Naive thymus-derived CD4-positive, alpha-beta T cell (primary cell): ENCODE measurements at regions of chr4 and their contacts with region 1.

Region 1: DNA sequence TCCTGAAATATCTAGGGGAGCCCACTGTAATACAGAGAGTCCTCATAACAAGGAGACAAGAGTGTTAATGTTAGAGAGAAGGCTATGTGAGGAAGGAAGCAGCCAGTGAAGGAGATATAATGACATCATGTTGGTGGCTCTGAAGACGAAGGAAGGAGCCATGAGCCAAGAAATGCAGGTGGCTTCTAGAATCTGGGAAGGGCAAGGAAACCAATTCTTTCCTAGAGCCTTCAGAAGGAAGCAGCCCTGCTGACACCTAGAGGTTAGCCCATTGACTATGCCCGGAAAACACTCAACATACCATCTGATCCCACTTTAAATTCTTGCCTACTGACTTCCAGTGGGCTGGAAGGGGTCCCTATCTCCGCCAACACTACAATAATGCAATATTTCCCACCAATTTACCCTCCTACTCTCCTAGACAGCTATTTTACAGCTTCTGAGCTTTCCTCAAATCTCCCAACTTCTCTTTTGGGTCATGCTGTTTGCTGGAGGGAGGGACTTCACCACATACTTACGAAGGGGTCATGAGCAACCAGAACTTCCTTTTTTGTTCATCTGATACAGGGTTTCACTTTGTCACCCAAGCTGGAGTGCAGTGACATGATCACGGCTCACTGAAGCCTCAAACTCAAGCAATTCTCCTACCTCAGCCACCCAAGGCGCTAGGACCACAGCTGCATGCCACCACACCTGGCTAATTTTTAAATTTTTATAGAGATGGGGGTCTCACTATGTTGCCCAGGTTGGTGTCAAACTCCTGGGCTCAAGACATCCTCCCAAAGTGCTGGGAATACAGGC is 25.2 kb upstream of the G3BP2 start:
- DNase-seq: peak in 1 of 9 donors; percentile 11
- ATAC-seq: peak; percentile 80
- H3K4me3 ChIP-seq: no peak overlapping the region
- H3K4me3 Mint-ChIP-seq: peak overlapping the region in 5 of 10 donors; percentile 9 to 64 (median 29)
- H3K27ac ChIP-seq: peak overlapping the region; percentile 14
- H3K27ac Mint-ChIP-seq: peak overlapping the region; percentile 4 to 89 (median 67)
- H3K4me1 ChIP-seq: peaks cover 14 to 20% of the 10 kb centered on the region in 2 donors
- H3K4me1 Mint-ChIP-seq: peaks cover 16 to 43% (median 39%) of the 10 kb centered on the region in 7 donors
- H3K27me3 ChIP-seq: no peaks in the 10 kb centered on the region
- H3K27me3 Mint-ChIP-seq: no peaks in the 10 kb centered on the region

Region 2: GRCh38 chr4:75683482-75684155 is 14.7 kb before region 1 on chr4:
- CTCF ChIA-PET with region 1: no interaction called
- POLR2A ChIA-PET with region 1: interaction called, 3 read pairs
- intact Hi-C with region 1: loop called (anchors 2 kb)
- DNase-seq: no peak
- ATAC-seq: no peak
- H3K4me3 ChIP-seq: no peak overlapping the region
- H3K4me3 Mint-ChIP-seq: peak overlapping the region in 3 of 10 donors; percentile 11 to 67 (median 29)
- H3K27ac ChIP-seq: no peak overlapping the region
- H3K27ac Mint-ChIP-seq: peak overlapping the region in 8 of 9 donors; percentile 45 to 91 (median 83)
- H3K4me1 ChIP-seq: peaks cover 18 to 24% of the 10 kb centered on the region in 2 donors
- H3K4me1 Mint-ChIP-seq: peaks cover 10 to 47% (median 31%) of the 10 kb centered on the region in 7 donors
- H3K27me3 ChIP-seq: no peaks in the 10 kb centered on the region
- H3K27me3 Mint-ChIP-seq: no peaks in the 10 kb centered on the region

Region 3: DNA sequence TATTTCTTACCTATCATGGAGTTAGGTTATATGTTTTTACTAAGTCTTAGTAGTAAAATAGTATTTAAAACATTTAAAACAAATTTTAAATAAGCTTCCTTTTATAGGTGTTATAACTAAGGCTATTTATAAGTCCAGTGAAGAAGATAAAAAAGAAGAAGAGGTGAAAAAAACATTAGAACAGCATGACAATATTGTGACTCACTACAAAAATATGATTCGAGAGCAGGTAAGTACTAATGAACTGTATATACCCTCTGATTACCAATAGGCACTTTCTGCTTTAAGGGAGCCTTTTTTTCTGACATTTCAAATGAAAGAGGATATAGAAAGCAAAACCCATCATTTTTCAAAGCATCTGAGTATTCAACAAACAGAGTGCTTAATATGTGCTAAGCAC is 102.6 kb after region 1 on chr4:
- CTCF ChIA-PET with region 1: no interaction called
- POLR2A ChIA-PET with region 1: no interaction called
- intact Hi-C with region 1: no loop called
- DNase-seq: no peak
- ATAC-seq: no peak
- H3K4me3 ChIP-seq: no peak overlapping the region
- H3K4me3 Mint-ChIP-seq: no peak overlapping the region
- H3K27ac ChIP-seq: no peak overlapping the region
- H3K27ac Mint-ChIP-seq: no peak overlapping the region
- H3K4me1 ChIP-seq: no peaks in the 10 kb centered on the region
- H3K4me1 Mint-ChIP-seq: no peaks in the 10 kb centered on the region
- H3K27me3 ChIP-seq: no peaks in the 10 kb centered on the region
- H3K27me3 Mint-ChIP-seq: no peaks in the 10 kb centered on the region